MCF 10A (cell line): ENCODE measurements at regions of chr20 and their contacts with region 1.

Region 1: GRCh38 chr20:53080969-53081871 is 109.1 kb downstream of the TSHZ2 start:
- DNase-seq: peak; percentile 82
- H3K4me3 Mint-ChIP-seq: peak overlapping the region; percentile 59
- H3K27ac Mint-ChIP-seq: peak overlapping the region; percentile 90
- H3K4me1 Mint-ChIP-seq: peaks cover 16% of the 10 kb centered on the region
- H3K27me3 Mint-ChIP-seq: no peaks in the 10 kb centered on the region
- CTCF ChIP-seq: no peak

Region 2: DNA sequence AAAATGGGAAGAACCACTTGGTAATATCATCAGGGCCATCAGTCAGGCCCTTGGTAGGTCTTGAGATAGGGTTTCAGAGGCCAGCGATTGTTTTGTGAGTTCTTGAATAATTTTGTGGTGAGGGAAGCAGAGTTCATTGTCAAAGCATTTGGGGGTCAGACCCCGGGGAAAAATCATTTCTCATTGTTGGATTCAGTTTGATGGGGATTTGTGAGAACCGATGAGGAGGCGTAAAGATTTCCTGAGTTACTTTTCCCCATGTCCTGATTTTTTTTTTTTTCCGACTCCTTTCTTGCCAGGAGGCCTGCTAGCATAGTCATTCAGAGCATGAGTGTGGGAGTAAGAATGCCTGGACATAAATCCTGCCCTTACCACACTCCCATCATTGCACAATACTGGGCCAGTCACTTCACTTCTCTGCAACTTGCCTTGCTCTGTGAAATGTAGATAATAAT is 48.7 kb before region 1 on chr20:
- CTCF ChIA-PET with region 1: interaction called, 3 read pairs
- POLR2A ChIA-PET with region 1: interaction called, 5 read pairs
- intact Hi-C with region 1: loop called (anchors 1 kb)
- DNase-seq: peak; percentile 93
- H3K4me3 Mint-ChIP-seq: peak overlapping the region; percentile 38
- H3K27ac Mint-ChIP-seq: peak overlapping the region; percentile 88
- H3K4me1 Mint-ChIP-seq: peaks cover 27% of the 10 kb centered on the region
- H3K27me3 Mint-ChIP-seq: no peaks in the 10 kb centered on the region
- CTCF ChIP-seq: no peak

Region 3: GRCh38 chr20:53100476-53100911 is 19.3 kb after region 1 on chr20:
- CTCF ChIA-PET with region 1: interaction called, 4 read pairs
- POLR2A ChIA-PET with region 1: interaction called, 14 read pairs
- intact Hi-C with region 1: no loop called
- DNase-seq: peak; percentile 19
- H3K4me3 Mint-ChIP-seq: peak overlapping the region; percentile 55
- H3K27ac Mint-ChIP-seq: peak overlapping the region; percentile 84
- H3K4me1 Mint-ChIP-seq: peaks cover 28% of the 10 kb centered on the region
- H3K27me3 Mint-ChIP-seq: no peaks in the 10 kb centered on the region
- CTCF ChIP-seq: no peak

Region 4: DNA sequence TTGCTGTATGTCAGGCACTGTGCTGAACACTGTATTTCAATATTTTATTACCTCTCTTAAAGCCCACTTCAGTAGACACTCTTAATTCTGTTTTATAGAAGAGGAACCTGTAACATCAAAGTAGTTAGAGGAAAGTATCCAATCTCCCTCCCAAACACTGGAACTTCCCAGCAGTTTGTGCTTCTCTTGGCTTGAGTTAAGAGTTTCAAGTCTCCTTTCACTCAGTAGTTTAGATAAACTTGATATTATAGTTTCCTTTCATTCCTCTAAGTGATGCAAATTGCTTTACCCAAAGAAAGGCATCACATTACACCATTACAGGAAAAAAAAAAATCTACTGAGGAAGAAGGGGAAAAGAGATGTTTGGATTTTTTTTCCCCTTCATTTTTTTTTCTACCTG is 55.3 kb after region 1 on chr20:
- CTCF ChIA-PET with region 1: no interaction called
- POLR2A ChIA-PET with region 1: no interaction called
- intact Hi-C with region 1: no loop called
- DNase-seq: no peak
- H3K4me3 Mint-ChIP-seq: no peak overlapping the region
- H3K27ac Mint-ChIP-seq: no peak overlapping the region
- H3K4me1 Mint-ChIP-seq: peaks cover 5% of the 10 kb centered on the region
- H3K27me3 Mint-ChIP-seq: no peaks in the 10 kb centered on the region
- CTCF ChIP-seq: no peak